Naive thymus-derived CD4-positive, alpha-beta T cell (primary cell): ENCODE measurements at regions of chr1 and their contacts with region 1.

Region 1: DNA sequence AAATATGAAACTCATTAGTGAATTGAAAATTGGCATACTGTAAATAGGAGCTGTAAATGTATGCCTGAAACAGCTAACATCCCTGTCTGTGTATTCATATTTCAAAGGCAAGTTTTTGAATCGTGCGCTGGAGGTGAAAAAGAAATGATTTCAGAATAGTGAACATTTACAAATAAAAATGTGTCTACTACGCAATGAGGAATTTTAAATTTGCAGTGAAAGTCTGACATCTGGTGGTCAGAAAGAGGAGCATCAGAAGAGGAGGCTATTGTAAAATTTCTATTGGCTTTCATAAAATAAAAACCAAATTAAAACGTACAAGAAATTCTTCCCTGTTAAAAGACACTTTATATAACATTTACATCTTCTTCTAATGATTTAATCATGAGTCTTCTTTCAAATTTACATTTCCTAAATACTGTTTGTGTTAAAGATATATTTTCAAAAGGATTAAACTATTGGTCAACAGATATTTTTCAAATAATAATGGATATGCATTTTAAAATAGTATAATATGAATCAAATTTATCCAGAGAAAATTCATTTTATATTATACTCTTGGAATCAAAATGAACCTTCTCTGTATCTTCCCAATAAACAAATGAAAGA is 113.7 kb upstream of the RRP15 start:
- DNase-seq: no peak
- ATAC-seq: no peak
- H3K4me3 ChIP-seq: no peak overlapping the region
- H3K4me3 Mint-ChIP-seq: no peak overlapping the region
- H3K27ac ChIP-seq: no peak overlapping the region
- H3K27ac Mint-ChIP-seq: no peak overlapping the region
- H3K4me1 ChIP-seq: no peaks in the 10 kb centered on the region
- H3K4me1 Mint-ChIP-seq: peaks cover 0 to 2% (median 0%) of the 10 kb centered on the region in 7 donors
- H3K27me3 ChIP-seq: no peaks in the 10 kb centered on the region
- H3K27me3 Mint-ChIP-seq: peaks cover 20 to 59% (median 29%) of the 10 kb centered on the region in 5 donors

Region 2: DNA sequence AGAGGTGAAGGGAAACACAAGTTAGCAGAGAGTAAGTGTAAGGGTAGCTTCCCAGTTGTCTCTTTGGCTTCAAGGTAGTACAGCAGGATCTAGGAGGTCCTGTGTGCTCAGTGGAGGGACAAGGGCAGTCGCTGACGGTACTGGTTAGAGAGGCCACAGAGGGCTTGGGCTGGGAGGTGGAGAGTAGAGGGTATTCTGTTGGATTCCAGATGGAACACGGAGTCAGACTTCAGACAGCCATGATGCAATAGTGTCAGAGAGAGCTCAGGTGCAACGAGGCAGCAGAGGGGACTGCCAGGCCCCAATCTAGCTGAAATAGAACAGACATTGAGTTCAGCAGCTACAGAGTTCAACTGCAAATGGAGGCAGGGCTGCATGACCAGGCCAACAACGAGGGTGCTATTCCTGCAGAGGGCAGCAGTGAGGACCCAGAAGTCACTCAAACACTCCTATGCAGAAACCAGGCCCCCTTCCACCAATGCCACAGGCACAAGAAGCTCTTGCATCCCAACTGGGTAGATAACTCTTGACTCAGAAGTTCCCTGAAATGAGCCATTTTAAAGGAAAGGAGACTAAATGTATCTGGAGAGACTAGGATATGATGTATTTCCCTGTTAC is 1123.2 kb before region 1 on chr1:
- CTCF ChIA-PET with region 1: no interaction called
- POLR2A ChIA-PET with region 1: no interaction called
- intact Hi-C with region 1: loop called in 1 of 2 experiments (anchors 5 kb)
- DNase-seq: no peak
- ATAC-seq: no peak
- H3K4me3 ChIP-seq: no peak overlapping the region
- H3K4me3 Mint-ChIP-seq: no peak overlapping the region
- H3K27ac ChIP-seq: no peak overlapping the region
- H3K27ac Mint-ChIP-seq: no peak overlapping the region
- H3K4me1 ChIP-seq: no peaks in the 10 kb centered on the region
- H3K4me1 Mint-ChIP-seq: no peaks in the 10 kb centered on the region
- H3K27me3 ChIP-seq: no peaks in the 10 kb centered on the region
- H3K27me3 Mint-ChIP-seq: no peaks in the 10 kb centered on the region

Region 3: DNA sequence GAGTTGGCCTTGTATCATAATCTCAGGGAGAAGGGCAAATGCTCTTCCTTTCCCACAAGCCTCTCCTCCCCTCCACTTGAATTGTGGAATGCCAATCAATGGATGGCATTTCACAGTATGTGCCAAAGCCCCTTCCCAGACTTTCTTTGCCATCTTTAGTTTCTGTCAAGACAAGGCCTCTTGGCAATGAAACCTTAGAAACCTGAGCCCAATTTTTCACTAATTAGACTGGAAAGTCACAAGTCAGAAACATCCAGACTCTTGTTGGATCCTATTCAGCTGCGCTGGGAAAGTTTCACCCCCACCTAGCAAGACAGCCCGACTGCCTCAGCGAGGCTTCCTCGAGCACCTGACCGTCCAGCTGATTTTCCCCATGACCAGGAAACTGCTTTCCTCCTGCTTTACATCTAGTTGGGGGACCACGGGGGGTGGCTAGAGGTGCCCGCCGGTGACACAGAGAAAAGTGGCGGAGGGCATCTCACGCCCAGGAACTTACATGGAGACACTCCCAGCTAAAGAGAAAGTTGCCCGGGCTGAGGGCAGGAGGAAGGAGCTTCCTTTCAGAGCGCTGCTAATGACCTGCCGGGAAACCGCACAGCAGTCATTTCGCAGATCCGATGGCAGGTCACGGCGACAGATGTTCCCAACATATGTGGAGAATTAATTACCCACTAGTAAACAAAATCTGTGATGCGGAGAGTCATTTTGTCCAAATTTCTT is 188.9 kb before region 1 on chr1:
- CTCF ChIA-PET with region 1: no interaction called
- POLR2A ChIA-PET with region 1: no interaction called
- intact Hi-C with region 1: no loop called
- DNase-seq: no peak
- ATAC-seq: no peak
- H3K4me3 ChIP-seq: no peak overlapping the region
- H3K4me3 Mint-ChIP-seq: no peak overlapping the region
- H3K27ac ChIP-seq: no peak overlapping the region
- H3K27ac Mint-ChIP-seq: no peak overlapping the region
- H3K4me1 ChIP-seq: no peaks in the 10 kb centered on the region
- H3K4me1 Mint-ChIP-seq: no peaks in the 10 kb centered on the region
- H3K27me3 ChIP-seq: no peaks in the 10 kb centered on the region
- H3K27me3 Mint-ChIP-seq: no peaks in the 10 kb centered on the region

Region 4: GRCh38 chr1:218135371-218135770 is 36.0 kb before region 1 on chr1:
- CTCF ChIA-PET with region 1: no interaction called
- POLR2A ChIA-PET with region 1: no interaction called
- intact Hi-C with region 1: no loop called
- DNase-seq: no peak
- ATAC-seq: no peak
- H3K4me3 ChIP-seq: no peak overlapping the region
- H3K4me3 Mint-ChIP-seq: no peak overlapping the region
- H3K27ac ChIP-seq: no peak overlapping the region
- H3K27ac Mint-ChIP-seq: no peak overlapping the region
- H3K4me1 ChIP-seq: no peaks in the 10 kb centered on the region
- H3K4me1 Mint-ChIP-seq: no peaks in the 10 kb centered on the region
- H3K27me3 ChIP-seq: no peaks in the 10 kb centered on the region
- H3K27me3 Mint-ChIP-seq: peaks cover 0 to 4% (median 0%) of the 10 kb centered on the region in 5 donors